ENCODE measurements at regions of chr17 and their contacts with region 1.

Region 1: DNA sequence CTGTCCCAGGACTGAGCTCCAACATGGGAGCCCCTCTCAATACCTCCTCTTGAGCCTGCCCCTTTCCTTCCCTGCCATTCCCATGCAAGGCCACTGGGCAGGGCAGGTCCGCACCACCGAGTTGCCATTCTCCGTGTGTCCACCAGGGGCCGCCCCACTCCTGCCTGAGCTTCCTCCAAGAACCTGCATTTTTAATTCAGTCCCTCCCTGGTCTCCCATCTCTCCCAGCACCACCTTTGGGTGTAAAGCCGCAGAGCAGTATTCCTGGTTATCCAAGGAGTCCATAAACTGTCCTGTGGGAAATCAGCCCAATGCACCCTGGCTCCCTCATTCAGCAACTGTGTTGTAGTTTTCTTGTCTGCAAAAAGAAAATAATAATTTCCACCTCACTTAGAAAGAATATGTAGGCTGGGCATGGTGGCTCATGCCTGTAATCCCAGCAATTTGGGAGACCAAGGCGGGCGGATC is 15.9 kb upstream of the ANKRD40CL start:
- DNase-seq: peak; percentile 53 to 82 (median 68)
- ATAC-seq: peak; percentile 86
- H3K4me3 ChIP-seq: no peak overlapping the region
- H3K4me3 Mint-ChIP-seq: peak overlapping the region in 7 of 10 donors; percentile 6 to 78 (median 46)
- H3K27ac ChIP-seq: no peak overlapping the region
- H3K27ac Mint-ChIP-seq: peak overlapping the region in 4 of 9 donors; percentile 21 to 58 (median 43)
- H3K4me1 ChIP-seq: peaks cover 0 to 14% of the 10 kb centered on the region in 2 donors
- H3K4me1 Mint-ChIP-seq: peaks cover 18 to 37% (median 27%) of the 10 kb centered on the region in 7 donors
- H3K27me3 ChIP-seq: no peaks in the 10 kb centered on the region
- H3K27me3 Mint-ChIP-seq: peaks cover 0 to 44% (median 0%) of the 10 kb centered on the region in 5 donors

Region 2: GRCh38 chr17:50547035-50547735 is 236.0 kb before region 1 on chr17 and contains the start of gene SPATA20:
- CTCF ChIA-PET with region 1: no interaction called
- POLR2A ChIA-PET with region 1: no interaction called
- intact Hi-C with region 1: loop called in 1 of 2 experiments (anchors 5 kb)
- DNase-seq: peak; percentile 73 to 86 (median 83)
- ATAC-seq: peak; percentile 90
- H3K4me3 ChIP-seq: peak within 1 kb of the TSS; percentile 65
- H3K4me3 Mint-ChIP-seq: peak within 1 kb of the TSS; percentile 52 to 85 (median 76)
- H3K27ac ChIP-seq: peak within 1 kb of the TSS; percentile 66
- H3K27ac Mint-ChIP-seq: peak within 1 kb of the TSS in 5 of 9 donors; percentile 37 to 87 (median 81)
- H3K4me1 ChIP-seq: peaks cover 11% of the 10 kb centered on the region in 2 donors
- H3K4me1 Mint-ChIP-seq: peaks cover 0 to 25% (median 20%) of the 10 kb centered on the region in 7 donors
- H3K27me3 ChIP-seq: no peaks in the 10 kb centered on the region
- H3K27me3 Mint-ChIP-seq: peaks cover 0 to 28% (median 7%) of the 10 kb centered on the region in 5 donors
- total RNA-seq, gene SPATA20: 14.3 to 19.4 (median 16.4) TPM

Region 3: DNA sequence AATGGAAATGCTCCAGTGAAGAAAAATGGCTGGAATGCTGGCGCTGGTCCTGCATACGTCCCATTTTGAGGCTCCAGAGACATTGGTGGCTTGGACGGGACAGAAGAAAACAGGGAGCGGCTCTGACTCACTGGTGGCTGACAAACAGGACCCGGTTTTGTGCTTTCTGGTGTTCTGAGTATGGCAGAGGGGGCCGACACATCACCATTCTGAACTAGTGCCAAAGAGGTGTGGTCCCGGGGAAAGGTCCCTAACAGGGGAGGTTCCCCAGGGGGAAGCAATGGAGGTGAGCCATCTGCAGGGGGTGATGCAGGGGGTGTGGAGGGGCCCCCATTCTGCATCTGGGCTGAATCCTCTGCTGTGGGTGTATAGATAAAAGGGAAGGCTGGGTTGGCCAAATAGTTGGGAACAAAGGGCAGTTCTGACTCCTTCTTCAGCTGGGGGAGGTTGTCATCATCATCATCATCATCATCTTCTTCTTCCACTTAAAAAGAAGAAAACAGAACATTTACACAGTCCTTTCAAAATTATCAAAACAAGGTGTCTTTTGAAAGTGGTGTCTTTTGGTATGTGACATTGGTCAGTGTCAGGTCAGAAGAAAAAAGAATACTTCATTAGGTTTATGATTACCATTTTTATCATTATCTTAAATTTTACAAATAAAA is 83.7 kb before region 1 on chr17:
- CTCF ChIA-PET with region 1: no interaction called
- POLR2A ChIA-PET with region 1: no interaction called
- intact Hi-C with region 1: no loop called
- DNase-seq: no peak
- ATAC-seq: no peak
- H3K4me3 ChIP-seq: no peak overlapping the region
- H3K4me3 Mint-ChIP-seq: no peak overlapping the region
- H3K27ac ChIP-seq: peak overlapping the region; percentile 2
- H3K27ac Mint-ChIP-seq: peak overlapping the region in 1 of 9 donors; percentile 23
- H3K4me1 ChIP-seq: peaks cover 0 to 5% of the 10 kb centered on the region in 2 donors
- H3K4me1 Mint-ChIP-seq: peaks cover 13 to 46% (median 41%) of the 10 kb centered on the region in 7 donors
- H3K27me3 ChIP-seq: no peaks in the 10 kb centered on the region
- H3K27me3 Mint-ChIP-seq: no peaks in the 10 kb centered on the region

Region 4: GRCh38 chr17:50816771-50817751 is 33.8 kb after region 1 on chr17:
- CTCF ChIA-PET with region 1: no interaction called
- POLR2A ChIA-PET with region 1: no interaction called
- intact Hi-C with region 1: loop called in 1 of 2 experiments (anchors 2 kb)
- DNase-seq: peak in 8 of 9 donors; percentile 32 to 67 (median 50)
- ATAC-seq: peak; percentile 88
- H3K4me3 ChIP-seq: no peak overlapping the region
- H3K4me3 Mint-ChIP-seq: peak overlapping the region in 3 of 10 donors; percentile 26 to 38 (median 32)
- H3K27ac ChIP-seq: no peak overlapping the region
- H3K27ac Mint-ChIP-seq: no peak overlapping the region
- H3K4me1 ChIP-seq: no peaks in the 10 kb centered on the region
- H3K4me1 Mint-ChIP-seq: peaks cover 0 to 9% (median 3%) of the 10 kb centered on the region in 7 donors
- H3K27me3 ChIP-seq: no peaks in the 10 kb centered on the region
- H3K27me3 Mint-ChIP-seq: peaks cover 6 to 33% (median 13%) of the 10 kb centered on the region in 5 donors

Region 5: GRCh38 chr17:50841949-50842354 is 58.7 kb after region 1 on chr17:
- CTCF ChIA-PET with region 1: interaction called, 3 read pairs
- POLR2A ChIA-PET with region 1: interaction called, 3 read pairs
- intact Hi-C with region 1: loop called (anchors 1 kb)
- DNase-seq: peak in 6 of 9 donors; percentile 34 to 58 (median 50)
- ATAC-seq: peak; percentile 67
- H3K4me3 ChIP-seq: no peak overlapping the region
- H3K4me3 Mint-ChIP-seq: no peak overlapping the region
- H3K27ac ChIP-seq: no peak overlapping the region
- H3K27ac Mint-ChIP-seq: no peak overlapping the region
- H3K4me1 ChIP-seq: no peaks in the 10 kb centered on the region
- H3K4me1 Mint-ChIP-seq: peaks cover 0 to 4% (median 0%) of the 10 kb centered on the region in 7 donors
- H3K27me3 ChIP-seq: no peaks in the 10 kb centered on the region
- H3K27me3 Mint-ChIP-seq: peaks cover 0 to 2% (median 0%) of the 10 kb centered on the region in 5 donors

Region 6: DNA sequence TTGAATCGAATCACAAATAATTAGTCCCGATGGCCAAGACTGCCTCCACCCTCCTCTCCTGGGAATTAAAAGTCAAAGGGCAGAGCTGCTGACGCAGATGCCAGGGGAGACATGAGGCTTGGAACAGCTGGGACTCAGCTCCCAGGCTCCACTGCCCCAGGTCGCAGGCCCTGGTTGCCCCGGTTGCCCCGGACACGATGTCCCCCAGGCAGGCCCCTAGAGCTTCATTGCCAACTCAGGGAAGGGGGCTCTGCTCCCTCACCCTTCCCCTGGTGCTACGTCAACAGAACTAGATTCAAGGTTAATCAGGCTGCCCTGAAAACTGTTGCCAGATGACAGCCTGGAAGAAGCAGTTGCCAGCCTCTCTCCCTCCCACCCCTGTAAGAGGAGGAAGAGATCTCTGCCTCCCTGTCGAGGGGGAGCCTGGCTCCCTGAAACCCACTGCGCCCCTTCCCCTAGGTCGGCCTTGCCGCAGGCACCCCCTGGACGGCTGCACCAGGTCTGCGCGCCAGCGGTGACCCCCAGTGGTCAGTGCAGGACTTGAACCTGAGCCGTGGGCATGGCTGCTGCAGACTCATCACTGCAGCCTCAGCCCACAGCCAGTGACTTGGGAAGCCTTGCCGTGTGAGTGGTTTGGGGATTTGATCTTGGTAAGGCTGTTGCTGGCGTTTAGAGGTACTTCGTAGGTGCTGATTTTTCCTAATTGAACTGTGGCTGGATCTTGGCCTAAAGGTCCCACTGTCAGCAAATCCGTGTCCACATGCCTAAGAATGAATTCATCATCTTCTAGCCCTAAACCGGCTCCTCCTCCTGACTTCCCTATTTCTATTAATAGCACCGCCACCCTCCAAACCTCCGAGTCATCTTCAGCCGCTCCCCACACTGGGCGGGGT is 167.0 kb after region 1 on chr17:
- CTCF ChIA-PET with region 1: interaction called, 18 read pairs
- POLR2A ChIA-PET with region 1: no interaction called
- intact Hi-C with region 1: loop called in 1 of 2 experiments (anchors 1 kb)
- DNase-seq: peak; percentile 34 to 71 (median 51)
- ATAC-seq: peak; percentile 88
- H3K4me3 ChIP-seq: no peak overlapping the region
- H3K4me3 Mint-ChIP-seq: peak overlapping the region in 2 of 10 donors; percentile 5 to 62
- H3K27ac ChIP-seq: no peak overlapping the region
- H3K27ac Mint-ChIP-seq: peak overlapping the region in 5 of 9 donors; percentile 31 to 90 (median 69)
- H3K4me1 ChIP-seq: peaks cover 0 to 6% of the 10 kb centered on the region in 2 donors
- H3K4me1 Mint-ChIP-seq: peaks cover 14 to 39% (median 24%) of the 10 kb centered on the region in 7 donors
- H3K27me3 ChIP-seq: no peaks in the 10 kb centered on the region
- H3K27me3 Mint-ChIP-seq: no peaks in the 10 kb centered on the region

Region 7: DNA sequence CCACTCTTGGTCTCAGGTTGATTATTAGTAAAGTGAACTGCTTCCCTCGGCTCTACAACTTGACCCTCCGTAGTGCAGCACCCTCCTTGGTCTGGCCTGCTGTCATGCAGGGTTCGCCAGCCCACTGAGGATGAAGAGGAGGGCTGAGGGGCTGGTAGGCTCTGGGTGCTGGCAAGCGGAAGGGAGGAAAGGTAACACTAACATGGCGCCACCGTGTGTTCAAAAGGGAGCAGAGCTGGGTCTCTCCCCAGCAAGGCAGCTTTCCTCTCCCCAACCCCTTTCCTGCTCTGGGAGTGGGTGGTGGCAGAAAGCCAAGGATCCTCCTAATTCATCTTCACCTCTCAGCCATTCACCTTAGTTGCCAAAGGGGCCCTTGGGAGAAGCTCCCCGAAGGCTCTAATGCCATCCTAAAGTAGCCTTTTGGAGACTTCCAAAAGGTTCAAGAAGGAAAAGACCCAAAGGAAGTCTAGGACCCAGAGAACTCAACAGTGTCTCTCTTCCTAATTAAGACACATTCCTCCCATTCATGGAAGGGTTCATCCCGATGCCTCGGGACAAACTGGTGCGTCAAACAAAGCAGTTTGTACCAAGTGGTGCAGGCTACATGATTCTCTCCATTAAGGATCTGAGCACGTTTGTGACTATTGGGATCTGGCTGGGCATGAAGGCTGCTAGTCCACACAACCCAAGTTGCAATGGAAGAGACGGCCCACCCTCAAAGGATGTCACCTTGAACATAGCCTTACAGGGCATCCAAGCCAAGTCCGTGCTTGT is 173.7 kb after region 1 on chr17:
- CTCF ChIA-PET with region 1: interaction called, 3 read pairs
- POLR2A ChIA-PET with region 1: no interaction called
- intact Hi-C with region 1: loop called (anchors 1 kb)
- DNase-seq: peak; percentile 39 to 72 (median 58)
- ATAC-seq: peak; percentile 92
- H3K4me3 ChIP-seq: no peak overlapping the region
- H3K4me3 Mint-ChIP-seq: peak overlapping the region in 1 of 10 donors; percentile 68
- H3K27ac ChIP-seq: no peak overlapping the region
- H3K27ac Mint-ChIP-seq: peak overlapping the region in 4 of 9 donors; percentile 17 to 62 (median 50)
- H3K4me1 ChIP-seq: peaks cover 0 to 7% of the 10 kb centered on the region in 2 donors
- H3K4me1 Mint-ChIP-seq: peaks cover 0 to 8% (median 4%) of the 10 kb centered on the region in 7 donors
- H3K27me3 ChIP-seq: no peaks in the 10 kb centered on the region
- H3K27me3 Mint-ChIP-seq: no peaks in the 10 kb centered on the region

Region 8: GRCh38 chr17:51056813-51057510 is 273.7 kb after region 1 on chr17:
- CTCF ChIA-PET with region 1: interaction called, 3 read pairs
- POLR2A ChIA-PET with region 1: no interaction called
- intact Hi-C with region 1: loop called in 1 of 2 experiments (anchors 5 kb)
- DNase-seq: peak in 7 of 9 donors; percentile 23 to 55 (median 44)
- ATAC-seq: peak; percentile 75
- H3K4me3 ChIP-seq: no peak overlapping the region
- H3K4me3 Mint-ChIP-seq: no peak overlapping the region
- H3K27ac ChIP-seq: no peak overlapping the region
- H3K27ac Mint-ChIP-seq: peak overlapping the region in 1 of 9 donors; percentile 84
- H3K4me1 ChIP-seq: no peaks in the 10 kb centered on the region
- H3K4me1 Mint-ChIP-seq: peaks cover 4 to 16% (median 12%) of the 10 kb centered on the region in 7 donors
- H3K27me3 ChIP-seq: no peaks in the 10 kb centered on the region
- H3K27me3 Mint-ChIP-seq: no peaks in the 10 kb centered on the region

Measured in naive thymus-derived CD4-positive, alpha-beta T cell (primary cell).